CD4-positive, alpha-beta memory T cell (primary cell): ENCODE measurements at regions of chr6 and their contacts with region 1.

Region 1: DNA sequence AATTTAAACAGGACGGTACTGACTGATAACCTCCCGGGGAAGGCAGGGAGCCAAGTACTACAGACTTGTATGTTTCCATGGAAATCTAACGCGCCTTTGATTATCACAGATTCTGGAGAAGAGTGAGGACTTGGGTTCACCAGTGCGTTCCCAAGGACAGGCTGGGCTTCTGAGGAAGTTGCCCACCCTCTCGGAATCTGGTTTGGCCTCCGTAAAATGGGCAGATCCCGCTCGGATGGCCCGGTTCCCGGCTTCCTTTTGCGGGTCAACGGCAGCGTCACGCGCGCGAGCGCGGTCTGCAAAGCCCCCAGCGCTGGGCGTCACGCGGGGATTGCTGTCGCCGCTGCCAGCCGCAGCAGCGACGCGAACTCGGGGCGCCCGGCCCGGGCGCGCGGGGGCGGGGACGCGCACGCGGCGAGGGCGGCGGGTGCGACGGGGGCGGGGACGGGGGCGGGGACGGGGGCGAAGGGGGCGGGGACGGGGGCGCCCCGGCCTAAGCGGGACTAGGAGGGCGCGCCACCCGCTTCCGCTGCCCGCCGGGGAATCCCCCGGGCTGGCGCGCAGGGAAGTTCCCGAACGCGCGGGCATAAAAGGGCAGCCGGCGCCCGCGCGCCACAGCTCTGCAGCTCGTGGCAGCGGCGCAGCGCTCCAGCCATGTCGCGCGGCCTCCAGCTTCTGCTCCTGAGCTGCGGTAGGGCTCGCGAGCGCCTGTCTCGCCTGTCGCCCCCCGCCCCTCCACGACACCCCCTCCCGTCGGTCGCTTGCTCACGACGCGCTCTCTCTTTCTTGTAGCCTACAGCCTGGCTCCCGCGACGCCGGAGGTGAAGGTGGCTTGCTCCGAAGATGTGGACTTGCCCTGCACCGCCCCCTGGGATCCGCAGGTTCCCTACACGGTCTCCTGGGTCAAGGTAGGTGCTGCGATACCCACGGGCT is at the start of gene CD83:
- DNase-seq: peak; percentile 85 to 91 (median 87)
- H3K4me3 ChIP-seq: peak within 1 kb of the TSS; percentile 80 to 93
- H3K4me3 Mint-ChIP-seq: peak within 1 kb of the TSS; percentile 88 to 98 (median 95)
- H3K27ac ChIP-seq: peak within 1 kb of the TSS; percentile 91
- H3K27ac Mint-ChIP-seq: peak within 1 kb of the TSS; percentile 92 to 97 (median 96)
- H3K4me1 ChIP-seq: peaks cover 41% of the 10 kb centered on the region
- H3K4me1 Mint-ChIP-seq: peaks cover 29 to 53% (median 31%) of the 10 kb centered on the region in 4 donors
- H3K27me3 ChIP-seq: no peaks in the 10 kb centered on the region
- H3K27me3 Mint-ChIP-seq: no peaks in the 10 kb centered on the region
- total RNA-seq, gene CD83: 5.8 to 7.0 TPM

Region 2: DNA sequence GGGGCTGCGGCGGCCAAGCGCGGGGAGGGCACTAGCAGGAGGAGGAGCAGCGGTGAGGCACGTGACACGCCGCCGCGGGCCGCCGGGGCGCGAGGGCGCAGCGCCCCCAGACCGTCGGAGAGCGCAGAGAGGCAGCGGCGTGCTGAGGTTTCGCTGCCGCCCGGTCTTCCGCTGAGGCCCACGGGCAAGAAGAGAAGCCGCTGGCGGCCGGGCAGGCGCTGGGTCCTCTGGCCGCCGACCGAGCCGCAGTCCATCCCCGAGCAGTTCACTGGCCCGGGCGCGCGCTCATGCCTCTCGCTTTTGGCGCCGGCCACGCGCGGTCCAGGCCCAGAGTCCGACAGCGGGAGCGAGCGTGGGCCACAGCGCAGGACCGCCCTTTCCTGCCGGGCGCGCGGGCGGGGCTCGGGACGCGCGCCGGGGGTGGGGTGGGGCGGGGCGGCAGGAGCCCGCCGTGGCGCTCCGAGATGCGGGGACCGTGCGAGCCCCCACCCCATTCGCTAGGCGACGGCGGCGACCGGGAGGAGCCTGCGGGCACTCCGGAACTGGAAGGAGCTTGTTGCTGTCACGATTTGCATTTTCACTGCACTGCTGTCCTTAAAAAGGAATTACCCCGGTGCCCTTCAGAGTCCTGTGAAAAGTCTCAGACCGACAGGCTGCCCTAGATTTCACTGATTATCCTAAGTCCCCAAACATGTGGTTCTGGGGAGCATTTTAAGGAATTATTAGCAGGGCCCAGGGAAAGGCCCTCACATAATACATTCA is 303.1 kb before region 1 on chr6 and contains the start of gene MCUR1:
- CTCF ChIA-PET with region 1: no interaction called
- POLR2A ChIA-PET with region 1: interaction called, 4 read pairs
- intact Hi-C with region 1: loop called (anchors 1 kb)
- DNase-seq: peak; percentile 77 to 83 (median 81)
- H3K4me3 ChIP-seq: peak within 1 kb of the TSS; percentile 34 to 78
- H3K4me3 Mint-ChIP-seq: peak within 1 kb of the TSS; percentile 88 to 93 (median 90)
- H3K27ac ChIP-seq: peak within 1 kb of the TSS; percentile 62
- H3K27ac Mint-ChIP-seq: peak within 1 kb of the TSS; percentile 82 to 92 (median 89)
- H3K4me1 ChIP-seq: peaks cover 28% of the 10 kb centered on the region
- H3K4me1 Mint-ChIP-seq: peaks cover 24 to 33% (median 31%) of the 10 kb centered on the region in 4 donors
- H3K27me3 ChIP-seq: no peaks in the 10 kb centered on the region
- H3K27me3 Mint-ChIP-seq: no peaks in the 10 kb centered on the region
- total RNA-seq, gene MCUR1: 11.3 to 11.5 TPM

Region 3: GRCh38 chr6:14075095-14075503 is 42.3 kb before region 1 on chr6:
- CTCF ChIA-PET with region 1: interaction called, 3 read pairs
- POLR2A ChIA-PET with region 1: interaction called, 15 read pairs
- intact Hi-C with region 1: loop called (anchors 2 kb)
- DNase-seq: peak; percentile 50 to 70 (median 57)
- H3K4me3 ChIP-seq: peak overlapping the region; percentile 5 to 79
- H3K4me3 Mint-ChIP-seq: peak overlapping the region; percentile 81 to 93 (median 89)
- H3K27ac ChIP-seq: peak overlapping the region; percentile 60
- H3K27ac Mint-ChIP-seq: peak overlapping the region; percentile 75 to 97 (median 96)
- H3K4me1 ChIP-seq: peaks cover 17% of the 10 kb centered on the region
- H3K4me1 Mint-ChIP-seq: peaks cover 17 to 37% (median 24%) of the 10 kb centered on the region in 4 donors
- H3K27me3 ChIP-seq: no peaks in the 10 kb centered on the region
- H3K27me3 Mint-ChIP-seq: peaks cover 0 to 2% of the 10 kb centered on the region in 2 donors